ENCODE measurements at regions of chr1 and their contacts with region 1.

Region 1: DNA sequence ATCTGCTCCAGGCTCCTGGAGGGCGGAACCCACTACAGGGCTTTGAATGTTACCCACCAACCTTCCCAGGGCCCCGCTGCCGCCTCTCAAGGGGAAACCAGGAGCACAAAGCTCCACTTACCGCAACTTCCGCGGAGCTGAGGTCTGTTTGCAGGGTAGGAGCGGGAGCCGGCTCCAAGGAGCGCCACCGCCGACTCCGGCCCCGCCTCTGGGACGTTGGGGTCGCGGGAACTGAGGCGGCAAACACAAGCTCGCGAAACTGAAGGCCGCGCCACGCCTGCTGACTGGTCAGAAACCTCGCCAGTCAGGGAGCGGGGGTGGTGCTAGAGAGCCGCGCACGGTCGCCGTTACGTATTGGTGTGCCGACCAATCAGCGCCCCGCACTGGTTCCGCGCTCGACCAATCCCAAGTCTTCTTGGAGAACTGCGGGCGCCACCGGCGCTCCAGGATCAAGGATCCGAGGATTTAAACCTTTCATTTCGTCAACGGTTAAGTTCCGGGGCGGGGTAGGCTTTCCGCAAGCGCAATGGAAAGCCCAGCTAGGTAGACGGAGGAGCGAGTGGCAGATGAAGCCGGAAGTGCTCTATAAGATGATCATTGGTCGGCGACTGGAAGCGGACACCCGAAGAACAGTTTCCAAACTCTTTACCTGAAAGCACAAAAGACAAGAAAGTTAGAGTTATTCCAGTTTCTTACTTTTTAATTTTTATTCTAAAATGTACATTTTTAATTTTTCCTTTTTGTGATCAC is at the start of gene STIL:
- DNase-seq: peak; percentile 99
- H3K4me3 Mint-ChIP-seq: peak within 1 kb of the TSS; percentile 94
- H3K27ac Mint-ChIP-seq: peak within 1 kb of the TSS; percentile 94
- H3K4me1 Mint-ChIP-seq: peaks cover 33% of the 10 kb centered on the region
- H3K27me3 Mint-ChIP-seq: no peaks in the 10 kb centered on the region
- total RNA-seq, gene STIL: 40.4 to 40.8 TPM

Region 2: DNA sequence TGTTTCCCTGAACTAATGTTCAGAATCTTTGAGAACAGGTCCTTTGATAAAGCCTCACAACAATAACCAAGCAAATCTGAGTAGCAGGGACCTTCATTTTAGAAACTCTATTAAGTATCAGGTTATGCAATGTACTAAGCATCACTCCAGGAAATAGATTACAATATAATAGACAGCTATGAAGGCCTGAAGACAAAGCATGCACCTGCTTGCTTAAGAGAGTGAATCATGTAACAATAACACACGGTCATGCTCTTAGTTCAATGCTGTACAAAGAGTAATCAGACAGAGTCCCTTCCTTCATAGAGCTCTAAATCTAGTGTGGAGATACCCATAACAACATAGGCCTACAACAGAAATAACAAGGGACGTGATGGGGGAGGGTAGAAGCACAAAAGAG is 11.4 kb after region 1 on chr1:
- CTCF ChIA-PET with region 1: interaction called, 8 read pairs
- POLR2A ChIA-PET with region 1: interaction called, 13 read pairs
- DNase-seq: no peak
- H3K4me3 Mint-ChIP-seq: no peak overlapping the region
- H3K27ac Mint-ChIP-seq: no peak overlapping the region
- H3K4me1 Mint-ChIP-seq: no peaks in the 10 kb centered on the region
- H3K27me3 Mint-ChIP-seq: no peaks in the 10 kb centered on the region

Region 3: GRCh38 chr1:47333922-47334764 is 20.1 kb after region 1 on chr1:
- CTCF ChIA-PET with region 1: interaction called, 25 read pairs
- POLR2A ChIA-PET with region 1: interaction called, 76 read pairs
- DNase-seq: peak; percentile 80
- H3K4me3 Mint-ChIP-seq: no peak overlapping the region
- H3K27ac Mint-ChIP-seq: peak overlapping the region; percentile 93
- H3K4me1 Mint-ChIP-seq: peaks cover 22% of the 10 kb centered on the region
- H3K27me3 Mint-ChIP-seq: no peaks in the 10 kb centered on the region

Region 4: DNA sequence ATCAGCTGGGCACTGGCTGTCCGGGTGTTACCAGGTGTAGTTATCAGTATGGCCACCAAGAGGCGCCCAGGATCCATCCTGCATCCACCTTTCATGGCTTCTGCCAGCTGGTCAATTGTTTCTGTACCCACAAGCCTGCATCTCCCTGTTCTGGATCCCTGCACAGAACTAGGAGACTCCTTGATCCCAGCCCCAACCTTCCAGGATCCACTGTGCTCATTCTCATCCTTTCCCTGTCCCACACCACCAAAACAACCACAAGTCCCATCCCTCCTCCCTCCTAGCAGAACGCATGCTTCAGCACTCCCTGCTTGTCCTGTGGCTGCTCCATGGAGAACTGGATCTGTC is 74.8 kb after region 1 on chr1:
- CTCF ChIA-PET with region 1: no interaction called
- POLR2A ChIA-PET with region 1: no interaction called
- DNase-seq: peak; percentile 60
- H3K4me3 Mint-ChIP-seq: no peak overlapping the region
- H3K27ac Mint-ChIP-seq: no peak overlapping the region
- H3K4me1 Mint-ChIP-seq: no peaks in the 10 kb centered on the region
- H3K27me3 Mint-ChIP-seq: peaks cover 2% of the 10 kb centered on the region

Measured in activated CD4-positive, alpha-beta memory T cell treated with anti-CD3 and anti-CD28 coated beads, Interleukin-2, amount 10 ng/mL, durations not matched to agents 7 days and 5 days (primary cell).